ENCODE measurements at regions of chr2 and their contacts with region 1.

Region 1: DNA sequence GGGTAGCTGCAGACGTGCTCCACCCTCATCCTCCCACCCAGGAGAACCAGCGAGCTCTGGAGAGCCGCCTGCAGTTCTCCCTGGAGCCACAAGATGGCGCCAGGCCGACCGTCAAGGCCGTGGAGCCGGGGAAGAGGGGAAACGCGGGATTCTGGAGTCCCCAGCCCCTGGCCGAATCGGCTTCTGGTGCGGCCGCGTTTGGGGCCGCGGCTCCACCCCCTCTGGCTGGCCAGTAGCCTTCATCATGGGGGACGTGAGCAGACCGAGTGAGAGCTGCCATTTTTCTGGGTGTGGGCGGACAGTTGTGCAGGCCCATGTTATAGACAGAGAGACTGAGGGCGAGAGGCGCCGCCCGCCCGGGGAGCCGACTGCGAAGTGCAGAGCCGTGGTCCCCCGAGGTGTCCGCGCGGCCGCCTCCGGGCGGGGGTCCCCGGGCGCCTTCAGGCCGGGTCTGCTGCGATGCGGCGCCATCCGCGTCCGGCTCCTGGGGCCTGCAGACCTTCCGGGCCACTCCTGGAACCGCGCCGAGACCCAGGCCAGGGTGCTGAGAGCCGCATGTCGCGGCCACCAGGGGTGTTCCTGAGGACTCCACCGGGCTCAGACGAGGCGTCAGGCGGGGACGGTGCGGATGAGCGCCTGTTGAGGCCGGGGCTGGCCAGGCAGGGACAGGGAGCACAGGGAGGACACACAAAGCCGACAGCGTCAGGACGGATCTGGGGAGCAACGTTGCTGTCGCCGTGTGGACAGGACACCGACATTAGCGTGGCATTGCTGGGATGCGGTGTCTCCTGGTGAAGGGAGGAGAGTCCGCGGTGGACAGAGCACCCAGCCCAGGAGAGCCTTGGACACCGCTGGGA is 418.2 kb upstream of the HS6ST1 start:
- DNase-seq: peak; percentile 80 to 90
- ATAC-seq: peak; percentile 80 to 91 (median 84)
- H3K4me3 ChIP-seq: peak overlapping the region; percentile 62
- H3K27ac ChIP-seq: no peak overlapping the region
- H3K4me1 ChIP-seq: peaks cover 7% of the 10 kb centered on the region
- H3K27me3 ChIP-seq: no peaks in the 10 kb centered on the region
- CTCF ChIP-seq: peak; percentile 99

Region 2: GRCh38 chr2:129849559-129850160 is 1112.7 kb after region 1 on chr2:
- intact Hi-C with region 1: loop called (anchors 1 to 10 kb)
- DNase-seq: no peak
- ATAC-seq: peak in 3 of 4 donors; percentile 69 to 82 (median 75)
- H3K4me3 ChIP-seq: no peak overlapping the region
- H3K27ac ChIP-seq: no peak overlapping the region
- H3K4me1 ChIP-seq: no peaks in the 10 kb centered on the region
- H3K27me3 ChIP-seq: peaks cover 0 to 2% (median 0%) of the 10 kb centered on the region in 3 donors
- CTCF ChIP-seq: peak; percentile 79